ENCODE measurements at regions of chr16 and their contacts with region 1.

Region 1: DNA sequence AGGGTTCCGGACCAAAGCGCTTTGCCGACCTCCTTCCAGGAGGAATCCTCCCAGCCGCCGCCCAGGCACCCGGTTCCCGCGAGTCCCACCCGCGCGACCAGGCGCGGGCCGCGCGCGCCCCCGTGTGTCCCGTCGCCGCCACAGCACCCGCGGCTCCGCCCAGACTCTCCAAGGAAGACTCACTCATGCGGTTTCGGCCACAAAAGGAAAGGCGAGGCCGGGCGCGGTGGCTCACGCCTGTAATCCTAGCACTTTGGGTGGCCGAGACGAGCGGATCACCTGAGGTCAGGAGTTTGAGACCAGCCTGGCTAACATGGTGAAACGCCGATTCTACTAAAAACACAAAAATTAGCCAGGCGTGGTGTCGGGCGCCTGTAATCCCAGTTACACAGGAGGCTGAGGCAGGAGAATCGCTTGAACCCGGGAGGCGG is 3.5 kb upstream of the PKMYT1 start:
- DNase-seq: peak; percentile 89
- H3K4me3 Mint-ChIP-seq: peak overlapping the region; percentile 67
- H3K27ac Mint-ChIP-seq: peak overlapping the region; percentile 61
- H3K4me1 Mint-ChIP-seq: peaks cover 26% of the 10 kb centered on the region
- H3K27me3 Mint-ChIP-seq: no peaks in the 10 kb centered on the region
- CTCF ChIP-seq: peak; percentile 97

Region 2: GRCh38 chr16:2968738-2969544 is 14.8 kb before region 1 on chr16 and contains the start of gene PAQR4:
- CTCF ChIA-PET with region 1: interaction called, 10 read pairs
- intact Hi-C with region 1: no loop called
- DNase-seq: peak; percentile 97
- H3K4me3 Mint-ChIP-seq: peak within 1 kb of the TSS; percentile 83
- H3K27ac Mint-ChIP-seq: peak within 1 kb of the TSS; percentile 72
- H3K4me1 Mint-ChIP-seq: peaks cover 31% of the 10 kb centered on the region
- H3K27me3 Mint-ChIP-seq: peaks cover 35% of the 10 kb centered on the region
- CTCF ChIP-seq: no peak
- total RNA-seq, gene PAQR4: 51.0 and 56.0 TPM in 2 replicates

Region 3: GRCh38 chr16:3094289-3095027 is 110.7 kb after region 1 on chr16:
- CTCF ChIA-PET with region 1: no interaction called
- intact Hi-C with region 1: no loop called
- DNase-seq: peak; percentile 46
- H3K4me3 Mint-ChIP-seq: no peak overlapping the region
- H3K27ac Mint-ChIP-seq: no peak overlapping the region
- H3K4me1 Mint-ChIP-seq: peaks cover 20% of the 10 kb centered on the region
- H3K27me3 Mint-ChIP-seq: peaks cover 45% of the 10 kb centered on the region
- CTCF ChIP-seq: peak; percentile 61

Measured in Calu3 (cell line).